GM12878 (cell line): ENCODE measurements at regions of chr2 and their contacts with region 1.

Region 1: DNA sequence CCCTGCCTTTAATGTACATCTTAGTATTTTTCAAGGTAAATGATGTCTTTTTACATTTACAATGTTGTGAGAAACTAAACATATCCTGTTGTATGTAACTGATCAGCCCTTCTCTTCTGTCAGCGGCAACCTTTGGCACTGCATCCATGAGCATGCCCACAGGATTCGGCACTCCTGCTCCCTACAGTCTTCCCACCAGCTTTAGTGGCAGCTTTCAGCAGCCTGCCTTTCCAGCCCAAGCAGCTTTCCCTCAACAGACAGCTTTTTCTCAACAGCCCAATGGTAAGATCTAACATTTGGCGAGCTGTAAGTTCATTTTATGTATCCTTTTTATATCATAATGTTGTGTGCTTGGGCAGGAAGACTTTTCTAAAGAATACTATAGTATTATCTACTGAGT is 46.9 kb upstream of the SCYGR2 start:
- DNase-seq: no peak
- ATAC-seq: no peak
- H3K4me3 ChIP-seq: no peak overlapping the region
- H3K27ac ChIP-seq: no peak overlapping the region
- H3K4me1 ChIP-seq: no peaks in the 10 kb centered on the region
- H3K27me3 ChIP-seq: no peaks in the 10 kb centered on the region
- CTCF ChIP-seq: no peak
- EP300 ChIP-seq: no peak
- POLR2A ChIP-seq: no peak
- RAD21 ChIP-seq: no peak

Region 2: GRCh38 chr2:227566012-227566411 is 14.2 kb after region 1 on chr2:
- CTCF ChIA-PET with region 1: interaction called, 4 read pairs
- POLR2A ChIA-PET with region 1: no interaction called
- RAD21 ChIA-PET with region 1: no interaction called
- SMC1A ChIA-PET with region 1: interaction called, 13 read pairs
- in situ Hi-C with region 1: no loop called
- intact Hi-C with region 1: no loop called
- DNase-seq: no peak
- ATAC-seq: peak; percentile 38; the same call in 2 of the 3 replicates
- H3K4me3 ChIP-seq: no peak overlapping the region
- H3K27ac ChIP-seq: no peak overlapping the region
- H3K4me1 ChIP-seq: no peaks in the 10 kb centered on the region
- H3K27me3 ChIP-seq: no peaks in the 10 kb centered on the region
- CTCF ChIP-seq: no peak
- EP300 ChIP-seq: no peak
- POLR2A ChIP-seq: no peak
- RAD21 ChIP-seq: no peak

Region 3: GRCh38 chr2:227812001-227812400 is 260.2 kb after region 1 on chr2:
- CTCF ChIA-PET with region 1: no interaction called
- POLR2A ChIA-PET with region 1: no interaction called
- RAD21 ChIA-PET with region 1: no interaction called
- SMC1A ChIA-PET with region 1: no interaction called
- in situ Hi-C with region 1: no loop called
- intact Hi-C with region 1: no loop called
- DNase-seq: no peak
- ATAC-seq: no peak
- H3K4me3 ChIP-seq: no peak overlapping the region
- H3K27ac ChIP-seq: no peak overlapping the region
- H3K4me1 ChIP-seq: no peaks in the 10 kb centered on the region
- H3K27me3 ChIP-seq: no peaks in the 10 kb centered on the region
- CTCF ChIP-seq: no peak
- EP300 ChIP-seq: no peak
- POLR2A ChIP-seq: no peak
- RAD21 ChIP-seq: no peak